CD8-positive, alpha-beta memory T cell (primary cell): ENCODE measurements at regions of chr11 and their contacts with region 1.

Region 1: GRCh38 chr11:64304316-64305072 is 830 bp upstream of the ESRRA start:
- DNase-seq: peak; percentile 85 to 94 (median 90)
- H3K4me3 ChIP-seq: peak overlapping the region; percentile 92
- H3K4me3 Mint-ChIP-seq: peak overlapping the region; percentile 90 to 96 (median 94)
- H3K27ac ChIP-seq: peak overlapping the region; percentile 89
- H3K27ac Mint-ChIP-seq: peak overlapping the region; percentile 95 to 98 (median 97)
- H3K4me1 ChIP-seq: peaks cover 35% of the 10 kb centered on the region
- H3K4me1 Mint-ChIP-seq: peaks cover 32 to 49% (median 32%) of the 10 kb centered on the region in 3 donors
- H3K27me3 ChIP-seq: peaks cover 22% of the 10 kb centered on the region
- H3K27me3 Mint-ChIP-seq: peaks cover 19 to 20% of the 10 kb centered on the region in 2 donors

Region 2: GRCh38 chr11:63838678-63839507 is 465.6 kb before region 1 on chr11 and contains the start of gene MARK2:
- CTCF ChIA-PET with region 1: no interaction called
- POLR2A ChIA-PET with region 1: no interaction called
- DNase-seq: peak; percentile 99 to 100 (median 100)
- H3K4me3 ChIP-seq: peak within 1 kb of the TSS; percentile 56
- H3K4me3 Mint-ChIP-seq: peak within 1 kb of the TSS; percentile 88 to 96 (median 92)
- H3K27ac ChIP-seq: peak within 1 kb of the TSS; percentile 80
- H3K27ac Mint-ChIP-seq: peak within 1 kb of the TSS; percentile 79 to 96 (median 92)
- H3K4me1 ChIP-seq: peaks cover 36% of the 10 kb centered on the region
- H3K4me1 Mint-ChIP-seq: peaks cover 54 to 61% (median 60%) of the 10 kb centered on the region in 3 donors
- H3K27me3 ChIP-seq: no peaks in the 10 kb centered on the region
- H3K27me3 Mint-ChIP-seq: peaks cover 0 to 4% of the 10 kb centered on the region in 2 donors
- total RNA-seq, gene MARK2: 34.5 to 38.0 TPM

Region 3: GRCh38 chr11:64185816-64186498 is 118.5 kb before region 1 on chr11 and contains the start of gene STIP1:
- CTCF ChIA-PET with region 1: interaction called, 9 read pairs
- POLR2A ChIA-PET with region 1: interaction called, 17 read pairs
- DNase-seq: peak; percentile 96 to 100 (median 99)
- H3K4me3 ChIP-seq: peak within 1 kb of the TSS; percentile 76
- H3K4me3 Mint-ChIP-seq: peak within 1 kb of the TSS in 5 of 7 donors; percentile 89 to 100 (median 94)
- H3K27ac ChIP-seq: peak within 1 kb of the TSS; percentile 76
- H3K27ac Mint-ChIP-seq: peak within 1 kb of the TSS; percentile 83 to 99 (median 96)
- H3K4me1 ChIP-seq: peaks cover 31% of the 10 kb centered on the region
- H3K4me1 Mint-ChIP-seq: peaks cover 28 to 48% (median 32%) of the 10 kb centered on the region in 3 donors
- H3K27me3 ChIP-seq: no peaks in the 10 kb centered on the region
- H3K27me3 Mint-ChIP-seq: peaks cover 0 to 5% of the 10 kb centered on the region in 2 donors
- total RNA-seq, gene STIP1: 457 to 461 TPM

Region 4: GRCh38 chr11:64225612-64226506 is 78.6 kb before region 1 on chr11 and contains the starts of genes NUDT22 and TRPT1:
- CTCF ChIA-PET with region 1: interaction called, 13 read pairs
- POLR2A ChIA-PET with region 1: interaction called, 8 read pairs
- DNase-seq: peak; percentile 86 to 93 (median 88)
- H3K4me3 ChIP-seq: peak within 1 kb of the TSS; percentile 90
- H3K4me3 Mint-ChIP-seq: peak within 1 kb of the TSS; percentile 90 to 94 (median 92)
- H3K27ac ChIP-seq: peak within 1 kb of the TSS; percentile 88
- H3K27ac Mint-ChIP-seq: peak within 1 kb of the TSS; percentile 89 to 96 (median 93)
- H3K4me1 ChIP-seq: peaks cover 35% of the 10 kb centered on the region
- H3K4me1 Mint-ChIP-seq: peaks cover 30 to 51% (median 31%) of the 10 kb centered on the region in 3 donors
- H3K27me3 ChIP-seq: no peaks in the 10 kb centered on the region
- H3K27me3 Mint-ChIP-seq: no peaks in the 10 kb centered on the region
- total RNA-seq, gene NUDT22: 75.3 to 78.6 TPM
- total RNA-seq, gene TRPT1: 28.3 to 31.5 TPM

Region 5: GRCh38 chr11:64269380-64270234 is 34.9 kb before region 1 on chr11:
- CTCF ChIA-PET with region 1: interaction called, 84 read pairs
- POLR2A ChIA-PET with region 1: interaction called, 27 read pairs
- DNase-seq: peak; percentile 95 to 98 (median 98)
- H3K4me3 ChIP-seq: peak overlapping the region; percentile 96
- H3K4me3 Mint-ChIP-seq: peak overlapping the region; percentile 93 to 99 (median 98)
- H3K27ac ChIP-seq: peak overlapping the region; percentile 86
- H3K27ac Mint-ChIP-seq: peak overlapping the region; percentile 96 to 99 (median 98)
- H3K4me1 ChIP-seq: peaks cover 22% of the 10 kb centered on the region
- H3K4me1 Mint-ChIP-seq: peaks cover 19 to 28% (median 20%) of the 10 kb centered on the region in 3 donors
- H3K27me3 ChIP-seq: no peaks in the 10 kb centered on the region
- H3K27me3 Mint-ChIP-seq: peaks cover 0 to 3% of the 10 kb centered on the region in 2 donors

Region 6: DNA sequence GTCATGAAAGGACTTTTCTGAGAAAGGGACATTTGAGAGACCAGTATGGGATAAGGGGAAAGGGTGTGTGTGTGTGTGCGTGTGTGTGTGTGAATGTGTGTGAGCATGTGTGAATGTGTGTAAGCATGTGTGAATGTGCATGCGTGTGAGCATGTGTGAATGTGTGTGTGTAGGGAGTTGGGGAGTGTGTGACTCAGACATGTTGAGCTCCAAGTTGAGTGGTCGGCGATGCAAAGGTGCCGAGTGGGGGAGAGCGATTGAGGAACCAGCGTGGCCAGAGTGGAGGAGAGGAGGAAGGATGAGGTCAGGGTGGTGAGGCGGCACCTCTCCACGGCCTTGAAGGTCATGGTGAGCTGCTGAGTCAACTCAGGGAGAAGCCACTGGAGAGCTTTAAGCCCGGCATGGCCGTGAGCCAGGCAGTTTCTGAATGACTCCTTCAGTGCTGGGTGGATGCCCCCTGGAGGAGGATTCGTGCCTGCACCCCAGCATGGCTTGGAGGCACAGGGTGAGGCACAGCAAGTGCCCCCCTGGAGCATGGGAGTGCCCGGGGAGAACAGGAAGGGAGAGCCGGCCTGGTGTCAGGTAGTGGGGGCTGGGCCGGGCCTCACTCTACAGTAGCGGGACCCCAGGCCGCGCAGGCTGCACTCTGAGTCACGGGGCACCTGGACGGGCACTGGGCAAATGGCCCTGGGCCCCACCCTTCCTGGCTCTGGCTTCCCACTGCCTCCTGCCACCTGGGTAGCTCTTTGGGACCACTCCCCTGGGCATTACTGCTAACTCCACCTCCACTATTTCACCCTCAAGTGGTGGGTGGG is 27.3 kb after region 1 on chr11:
- CTCF ChIA-PET with region 1: interaction called, 14 read pairs
- POLR2A ChIA-PET with region 1: interaction called, 5 read pairs
- DNase-seq: peak; percentile 55 to 82 (median 60)
- H3K4me3 ChIP-seq: no peak overlapping the region
- H3K4me3 Mint-ChIP-seq: peak overlapping the region in 6 of 7 donors; percentile 14 to 70 (median 59)
- H3K27ac ChIP-seq: peak overlapping the region; percentile 38
- H3K27ac Mint-ChIP-seq: peak overlapping the region; percentile 0 to 94 (median 71)
- H3K4me1 ChIP-seq: peaks cover 12% of the 10 kb centered on the region
- H3K4me1 Mint-ChIP-seq: peaks cover 7 to 13% (median 9%) of the 10 kb centered on the region in 3 donors
- H3K27me3 ChIP-seq: no peaks in the 10 kb centered on the region
- H3K27me3 Mint-ChIP-seq: no peaks in the 10 kb centered on the region